Activated CD4-positive, alpha-beta T cell treated with anti-CD3 and anti-CD28 coated beads for 36 hours (primary cell): ENCODE measurements at regions of chr7 and their contacts with region 1.

Region 1: GRCh38 chr7:91880413-91881241 is at the start of gene MTERF1:
- DNase-seq: peak; percentile 97
- ATAC-seq: peak; percentile 98
- H3K4me3 Mint-ChIP-seq: peak within 1 kb of the TSS; percentile 92
- H3K27ac Mint-ChIP-seq: peak within 1 kb of the TSS; percentile 94
- H3K4me1 Mint-ChIP-seq: peaks cover 29% of the 10 kb centered on the region
- H3K27me3 Mint-ChIP-seq: no peaks in the 10 kb centered on the region
- total RNA-seq, gene MTERF1: 16.7 to 16.9 TPM

Region 2: DNA sequence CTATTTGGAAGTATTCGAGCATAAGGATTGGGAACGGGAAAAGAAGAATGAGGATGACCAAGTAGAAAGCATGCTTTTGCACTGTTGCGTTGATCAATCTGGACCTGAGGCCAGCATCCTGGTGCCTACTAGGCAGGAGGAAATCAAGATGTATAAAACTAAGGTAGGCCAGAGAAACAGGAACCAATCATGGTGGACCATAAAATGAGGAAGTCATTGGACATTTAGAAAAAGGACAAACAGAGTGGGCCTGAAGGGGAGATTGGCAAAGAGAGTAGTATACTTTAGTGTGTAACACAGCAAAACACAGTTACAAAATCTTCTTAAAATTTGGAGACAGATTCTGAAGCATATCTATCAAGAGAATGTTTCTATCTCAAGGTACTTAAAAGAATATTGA is 787.4 kb before region 1 on chr7:
- CTCF ChIA-PET with region 1: no interaction called
- POLR2A ChIA-PET with region 1: no interaction called
- intact Hi-C with region 1: no loop called
- DNase-seq: no peak
- ATAC-seq: no peak
- H3K4me3 Mint-ChIP-seq: no peak overlapping the region
- H3K27ac Mint-ChIP-seq: no peak overlapping the region
- H3K4me1 Mint-ChIP-seq: peaks cover 4% of the 10 kb centered on the region
- H3K27me3 Mint-ChIP-seq: no peaks in the 10 kb centered on the region

Region 3: DNA sequence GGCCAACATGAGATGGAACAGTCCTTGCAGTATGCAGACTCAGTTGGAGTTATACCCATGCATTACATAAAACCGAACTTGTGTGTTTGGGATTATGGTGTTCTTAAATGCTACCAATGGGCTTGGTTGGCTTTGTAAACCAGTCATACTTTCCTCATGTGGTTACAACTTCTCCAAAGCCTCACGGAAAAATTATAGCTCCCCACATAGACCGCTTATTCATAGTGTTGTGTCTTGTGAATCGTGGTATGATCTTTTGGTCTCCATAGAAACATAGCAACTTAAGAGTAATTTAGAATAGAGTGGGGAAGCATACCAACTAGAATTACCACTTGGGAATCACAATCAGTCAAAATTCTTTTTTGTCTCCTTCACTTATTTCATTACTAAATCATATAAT is 728.7 kb before region 1 on chr7:
- CTCF ChIA-PET with region 1: no interaction called
- POLR2A ChIA-PET with region 1: no interaction called
- intact Hi-C with region 1: no loop called
- DNase-seq: no peak
- ATAC-seq: peak; percentile 33
- H3K4me3 Mint-ChIP-seq: no peak overlapping the region
- H3K27ac Mint-ChIP-seq: no peak overlapping the region
- H3K4me1 Mint-ChIP-seq: no peaks in the 10 kb centered on the region
- H3K27me3 Mint-ChIP-seq: no peaks in the 10 kb centered on the region

Region 4: DNA sequence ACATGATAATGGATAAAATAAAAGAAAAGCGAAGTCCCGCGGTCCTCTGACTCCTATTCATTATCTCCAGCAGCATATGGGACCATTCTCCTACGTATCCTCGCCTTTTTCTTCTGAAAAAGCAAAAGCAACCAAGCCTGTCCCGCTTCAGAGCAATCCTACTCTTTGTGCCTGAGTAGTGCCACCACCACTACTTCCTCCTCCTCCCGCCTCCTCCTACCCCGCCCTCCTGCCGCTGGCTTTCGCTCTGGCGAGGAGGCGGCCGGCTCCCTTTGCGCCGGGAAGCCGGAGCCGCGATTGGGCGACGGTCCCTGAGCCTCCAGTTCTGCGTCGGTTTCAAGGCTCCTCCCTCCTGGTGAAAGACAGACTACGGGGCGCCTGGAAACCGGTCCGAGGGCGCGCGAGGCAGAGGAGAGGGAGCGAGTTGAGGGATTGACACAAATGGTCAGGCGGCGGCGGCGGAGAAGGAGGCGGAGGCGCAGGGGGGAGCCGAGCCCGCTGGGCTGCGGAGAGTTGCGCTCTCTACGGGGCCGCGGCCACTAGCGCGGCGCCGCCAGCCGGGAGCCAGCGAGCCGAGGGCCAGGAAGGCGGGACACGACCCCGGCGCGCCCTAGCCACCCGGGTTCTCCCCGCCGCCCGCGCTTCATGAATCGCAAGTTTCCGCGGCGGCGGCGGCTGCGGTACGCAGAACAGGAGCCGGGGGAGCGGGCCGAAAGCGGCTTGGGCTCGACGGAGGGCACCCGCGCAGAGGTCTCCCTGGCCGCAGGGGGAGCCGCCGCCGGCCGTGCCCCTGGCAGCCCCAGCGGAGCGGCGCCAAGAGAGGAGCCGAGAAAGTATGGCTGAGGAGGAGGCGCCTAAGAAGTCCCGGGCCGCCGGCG is 616.3 kb before region 1 on chr7 and contains the start of gene FZD1:
- CTCF ChIA-PET with region 1: no interaction called
- POLR2A ChIA-PET with region 1: interaction called, 3 read pairs
- intact Hi-C with region 1: loop called in 1 of 2 experiments (anchors 2 kb)
- DNase-seq: peak; percentile 89
- ATAC-seq: peak; percentile 90
- H3K4me3 Mint-ChIP-seq: peak within 1 kb of the TSS; percentile 76
- H3K27ac Mint-ChIP-seq: peak within 1 kb of the TSS; percentile 65
- H3K4me1 Mint-ChIP-seq: peaks cover 8% of the 10 kb centered on the region
- H3K27me3 Mint-ChIP-seq: peaks cover 41% of the 10 kb centered on the region
- total RNA-seq, gene FZD1: 0.47 to 0.69 TPM

Region 5: DNA sequence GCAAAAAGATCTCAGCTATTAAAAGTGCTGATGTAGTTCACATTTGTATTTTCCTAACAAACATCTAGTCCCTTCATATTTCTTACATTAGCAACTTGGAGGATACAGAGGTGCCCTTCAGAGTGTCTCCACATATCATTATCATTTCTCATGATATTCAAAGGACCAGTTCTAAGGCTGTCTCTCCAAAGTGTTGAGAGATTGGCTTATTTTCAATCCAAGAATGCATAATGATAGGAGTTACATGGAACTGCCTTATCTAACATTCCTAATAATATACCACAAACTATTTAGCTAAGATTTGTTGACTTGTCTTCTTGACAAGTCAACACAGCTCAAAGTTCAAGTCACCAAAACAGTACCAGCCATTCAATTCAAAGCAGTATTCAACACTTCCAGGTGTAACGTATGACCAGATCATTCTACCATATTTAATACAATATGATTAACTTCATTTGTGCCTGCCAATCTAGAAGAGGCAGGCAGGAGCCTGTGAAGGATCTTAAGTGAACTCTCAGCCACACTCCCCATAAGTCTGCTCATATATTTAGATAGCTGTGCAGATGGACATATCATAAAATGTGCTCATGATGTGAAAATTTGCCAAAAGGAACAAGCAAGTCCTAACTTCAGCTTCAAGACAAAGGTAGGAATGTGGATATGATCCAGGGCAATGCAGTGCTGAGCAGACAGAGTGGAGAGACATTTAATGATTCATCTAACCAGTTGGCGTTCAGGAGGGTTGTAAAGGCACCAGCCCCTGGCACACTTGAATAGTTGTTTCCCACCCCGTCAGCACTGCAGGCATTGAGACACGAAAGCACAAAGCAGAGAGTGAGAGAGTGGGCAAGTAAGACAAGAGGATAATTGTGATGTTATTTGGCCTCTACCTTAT is 108.5 kb before region 1 on chr7:
- CTCF ChIA-PET with region 1: no interaction called
- POLR2A ChIA-PET with region 1: no interaction called
- intact Hi-C with region 1: no loop called
- DNase-seq: no peak
- ATAC-seq: no peak
- H3K4me3 Mint-ChIP-seq: no peak overlapping the region
- H3K27ac Mint-ChIP-seq: no peak overlapping the region
- H3K4me1 Mint-ChIP-seq: no peaks in the 10 kb centered on the region
- H3K27me3 Mint-ChIP-seq: peaks cover 2% of the 10 kb centered on the region

Region 6: GRCh38 chr7:91869661-91870060 is 11.0 kb before region 1 on chr7:
- CTCF ChIA-PET with region 1: interaction called, 14 read pairs
- POLR2A ChIA-PET with region 1: no interaction called
- intact Hi-C with region 1: no loop called
- DNase-seq: no peak
- ATAC-seq: no peak
- H3K4me3 Mint-ChIP-seq: no peak overlapping the region
- H3K27ac Mint-ChIP-seq: no peak overlapping the region
- H3K4me1 Mint-ChIP-seq: peaks cover 4% of the 10 kb centered on the region
- H3K27me3 Mint-ChIP-seq: no peaks in the 10 kb centered on the region

Region 7: GRCh38 chr7:92134271-92135051 is 253.8 kb after region 1 on chr7 and contains the start of gene CYP51A1:
- CTCF ChIA-PET with region 1: no interaction called
- POLR2A ChIA-PET with region 1: no interaction called
- intact Hi-C with region 1: loop called (anchors 1 to 5 kb)
- DNase-seq: peak; percentile 94
- ATAC-seq: peak; percentile 92
- H3K4me3 Mint-ChIP-seq: peak within 1 kb of the TSS; percentile 98
- H3K27ac Mint-ChIP-seq: peak within 1 kb of the TSS; percentile 99
- H3K4me1 Mint-ChIP-seq: peaks cover 20% of the 10 kb centered on the region
- H3K27me3 Mint-ChIP-seq: no peaks in the 10 kb centered on the region
- total RNA-seq, gene CYP51A1: 57.8 to 63.3 TPM

Region 8: GRCh38 chr7:92584996-92585395 is 704.4 kb after region 1 on chr7:
- CTCF ChIA-PET with region 1: no interaction called
- POLR2A ChIA-PET with region 1: no interaction called
- intact Hi-C with region 1: loop called in 1 of 2 experiments (anchors 1 kb)
- DNase-seq: peak; percentile 20
- ATAC-seq: peak; percentile 20
- H3K4me3 Mint-ChIP-seq: no peak overlapping the region
- H3K27ac Mint-ChIP-seq: peak overlapping the region; percentile 83
- H3K4me1 Mint-ChIP-seq: peaks cover 65% of the 10 kb centered on the region
- H3K27me3 Mint-ChIP-seq: no peaks in the 10 kb centered on the region